Mammary epithelial cell (primary cell): ENCODE measurements at regions of chr1 and their contacts with region 1.

Region 1: GRCh38 chr1:99808391-99809115 is 41.6 kb upstream of the AGL start:
- DNase-seq: peak; percentile 81
- H3K4me3 ChIP-seq: no peak overlapping the region
- H3K27ac ChIP-seq: peak overlapping the region; percentile 16
- H3K4me1 ChIP-seq: peaks cover 6% of the 10 kb centered on the region
- H3K27me3 ChIP-seq: no peaks in the 10 kb centered on the region
- CTCF ChIP-seq: peak; percentile 47 to 49

Region 2: GRCh38 chr1:100037927-100038659 is 229.5 kb after region 1 on chr1:
- CTCF ChIA-PET with region 1: no interaction called
- dilution Hi-C with region 1: no loop called
- in situ Hi-C with region 1: loop called in 1 of 2 experiments (anchors 25 kb)
- intact Hi-C with region 1: loop called (anchors 1 kb)
- DNase-seq: peak; percentile 87
- H3K4me3 ChIP-seq: peak overlapping the region; percentile 59 to 95 (median 93)
- H3K27ac ChIP-seq: peak overlapping the region; percentile 97
- H3K4me1 ChIP-seq: peaks cover 6% of the 10 kb centered on the region
- H3K27me3 ChIP-seq: no peaks in the 10 kb centered on the region
- CTCF ChIP-seq: no peak

Region 3: GRCh38 chr1:100265931-100266740 is 457.6 kb after region 1 on chr1 and contains the start of gene RTCA:
- CTCF ChIA-PET with region 1: no interaction called
- dilution Hi-C with region 1: no loop called
- in situ Hi-C with region 1: loop called in 1 of 2 experiments (anchors 25 kb)
- intact Hi-C with region 1: loop called (anchors 5 kb)
- DNase-seq: peak; percentile 91
- H3K4me3 ChIP-seq: peak within 1 kb of the TSS; percentile 88 to 97 (median 93)
- H3K27ac ChIP-seq: peak within 1 kb of the TSS; percentile 75
- H3K4me1 ChIP-seq: peaks cover 15% of the 10 kb centered on the region
- H3K27me3 ChIP-seq: no peaks in the 10 kb centered on the region
- CTCF ChIP-seq: no peak
- total RNA-seq, gene RTCA: 31.5 to 60.2 TPM

Region 4: GRCh38 chr1:100606438-100606837 is 797.9 kb after region 1 on chr1:
- CTCF ChIA-PET with region 1: no interaction called
- dilution Hi-C with region 1: no loop called
- in situ Hi-C with region 1: no loop called
- intact Hi-C with region 1: loop called (anchors 5 kb)
- DNase-seq: peak; percentile 51
- H3K4me3 ChIP-seq: no peak overlapping the region
- H3K27ac ChIP-seq: no peak overlapping the region
- H3K4me1 ChIP-seq: peaks cover 10% of the 10 kb centered on the region
- H3K27me3 ChIP-seq: no peaks in the 10 kb centered on the region
- CTCF ChIP-seq: peak; percentile 77 to 95

Region 5: GRCh38 chr1:100875228-100875627 is 1066.7 kb after region 1 on chr1:
- CTCF ChIA-PET with region 1: no interaction called
- dilution Hi-C with region 1: no loop called
- in situ Hi-C with region 1: loop called (anchors 10 to 25 kb)
- intact Hi-C with region 1: no loop called
- DNase-seq: no peak
- H3K4me3 ChIP-seq: no peak overlapping the region
- H3K27ac ChIP-seq: no peak overlapping the region
- H3K4me1 ChIP-seq: no peaks in the 10 kb centered on the region
- H3K27me3 ChIP-seq: no peaks in the 10 kb centered on the region
- CTCF ChIP-seq: no peak